CD4-positive, alpha-beta memory T cell (primary cell): ENCODE measurements at regions of chr9 and their contacts with region 1.

Region 1: DNA sequence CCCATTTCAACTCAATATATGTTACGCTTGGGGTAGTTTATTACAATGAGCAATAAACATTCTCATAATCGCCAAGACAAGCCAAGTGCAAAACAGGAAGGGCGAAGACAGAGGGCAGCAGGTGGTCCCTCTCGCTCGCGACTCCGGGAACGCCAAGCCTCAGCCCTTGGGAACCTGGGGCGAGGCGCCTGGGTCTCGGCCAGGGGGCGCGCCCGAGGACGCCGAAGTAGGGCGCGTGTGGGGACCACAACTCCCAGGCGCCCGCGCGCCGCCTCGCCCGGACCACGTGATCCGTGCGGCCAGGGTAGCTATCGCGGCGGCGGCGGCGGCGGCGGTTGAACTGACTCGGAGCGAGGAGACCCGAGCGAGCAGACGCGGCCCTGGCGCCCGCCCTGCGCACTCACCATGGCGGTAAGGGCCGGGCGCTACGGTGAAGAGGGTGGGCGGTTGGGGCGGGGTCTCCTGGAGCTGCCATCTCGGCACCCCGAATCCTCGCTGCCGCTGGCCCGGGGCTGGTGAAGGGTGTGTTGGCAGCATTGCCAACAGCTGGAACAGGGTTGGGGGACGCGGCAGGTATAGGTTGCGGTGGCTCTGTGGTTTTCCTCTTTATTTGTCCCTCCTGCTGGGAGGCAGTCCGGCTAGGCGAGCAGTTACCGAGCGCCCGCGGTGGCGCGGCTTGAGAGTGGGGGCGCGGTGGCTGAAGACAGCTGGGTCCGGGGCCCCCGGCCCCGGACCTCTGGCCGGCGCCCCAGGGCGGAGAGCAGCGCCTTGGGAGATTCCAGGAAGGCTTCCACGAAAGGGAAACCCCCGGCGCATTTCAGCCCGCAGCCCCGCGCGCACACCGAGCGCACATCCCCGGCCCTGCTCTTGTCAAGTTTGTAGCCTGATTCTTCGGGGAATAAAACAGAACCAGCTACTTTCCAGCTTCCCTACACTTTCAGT is at the start of gene SLC31A2:
- DNase-seq: peak; percentile 80 to 85 (median 81)
- H3K4me3 ChIP-seq: peak within 1 kb of the TSS; percentile 47 to 76
- H3K4me3 Mint-ChIP-seq: peak within 1 kb of the TSS; percentile 83 to 87 (median 86)
- H3K27ac ChIP-seq: peak within 1 kb of the TSS; percentile 50
- H3K27ac Mint-ChIP-seq: peak within 1 kb of the TSS; percentile 51 to 84 (median 76)
- H3K4me1 ChIP-seq: peaks cover 29% of the 10 kb centered on the region
- H3K4me1 Mint-ChIP-seq: peaks cover 12 to 40% (median 30%) of the 10 kb centered on the region in 4 donors
- H3K27me3 ChIP-seq: no peaks in the 10 kb centered on the region
- H3K27me3 Mint-ChIP-seq: peaks cover 2 to 6% of the 10 kb centered on the region in 2 donors
- total RNA-seq, gene SLC31A2: 5.3 to 6.1 TPM

Region 2: DNA sequence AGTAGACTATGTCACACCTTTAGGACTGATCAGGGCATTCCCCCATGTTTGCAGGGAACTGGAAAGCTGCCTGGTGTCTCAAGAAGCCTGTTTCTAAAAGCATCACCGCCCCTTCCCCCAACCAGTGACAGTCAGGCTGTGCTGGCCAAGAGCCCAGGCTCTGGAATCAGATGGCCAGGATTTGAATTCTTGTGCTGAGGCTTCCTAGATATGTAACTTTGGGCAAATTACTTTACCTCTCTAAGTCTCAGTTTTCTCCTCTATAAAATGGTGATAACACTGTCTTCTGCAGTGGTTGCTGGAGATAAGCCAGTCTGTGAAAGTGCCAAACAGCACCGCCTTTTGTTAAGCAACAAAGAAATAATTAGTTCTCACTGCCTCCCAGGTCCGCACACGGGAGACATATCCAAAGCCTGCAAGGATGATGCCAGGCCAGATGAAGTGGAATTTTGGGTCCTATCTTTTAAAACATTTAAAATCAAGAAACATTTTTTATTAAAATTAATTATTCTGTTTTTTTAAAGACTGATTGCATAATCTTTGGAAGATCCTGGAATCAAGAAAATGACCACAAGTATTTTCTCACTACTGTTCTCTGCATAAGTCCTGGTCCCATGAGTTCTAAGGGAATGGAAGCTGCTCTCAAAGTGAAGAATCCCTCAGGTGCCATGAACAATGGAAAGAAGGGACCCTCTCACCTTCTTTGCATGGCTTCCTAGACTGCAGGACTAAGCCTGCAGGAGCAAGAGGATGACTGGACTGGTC is 13.8 kb after region 1 on chr9:
- CTCF ChIA-PET with region 1: interaction called, 12 read pairs
- POLR2A ChIA-PET with region 1: interaction called, 4 read pairs
- intact Hi-C with region 1: no loop called
- DNase-seq: no peak
- H3K4me3 ChIP-seq: no peak overlapping the region
- H3K4me3 Mint-ChIP-seq: no peak overlapping the region
- H3K27ac ChIP-seq: no peak overlapping the region
- H3K27ac Mint-ChIP-seq: no peak overlapping the region
- H3K4me1 ChIP-seq: no peaks in the 10 kb centered on the region
- H3K4me1 Mint-ChIP-seq: no peaks in the 10 kb centered on the region
- H3K27me3 ChIP-seq: no peaks in the 10 kb centered on the region
- H3K27me3 Mint-ChIP-seq: no peaks in the 10 kb centered on the region